Activated CD8-positive, alpha-beta T cell treated with anti-CD3 and anti-CD28 coated beads for 36 hours (primary cell): ENCODE measurements at regions of chr7 and their contacts with region 1.

Region 1: DNA sequence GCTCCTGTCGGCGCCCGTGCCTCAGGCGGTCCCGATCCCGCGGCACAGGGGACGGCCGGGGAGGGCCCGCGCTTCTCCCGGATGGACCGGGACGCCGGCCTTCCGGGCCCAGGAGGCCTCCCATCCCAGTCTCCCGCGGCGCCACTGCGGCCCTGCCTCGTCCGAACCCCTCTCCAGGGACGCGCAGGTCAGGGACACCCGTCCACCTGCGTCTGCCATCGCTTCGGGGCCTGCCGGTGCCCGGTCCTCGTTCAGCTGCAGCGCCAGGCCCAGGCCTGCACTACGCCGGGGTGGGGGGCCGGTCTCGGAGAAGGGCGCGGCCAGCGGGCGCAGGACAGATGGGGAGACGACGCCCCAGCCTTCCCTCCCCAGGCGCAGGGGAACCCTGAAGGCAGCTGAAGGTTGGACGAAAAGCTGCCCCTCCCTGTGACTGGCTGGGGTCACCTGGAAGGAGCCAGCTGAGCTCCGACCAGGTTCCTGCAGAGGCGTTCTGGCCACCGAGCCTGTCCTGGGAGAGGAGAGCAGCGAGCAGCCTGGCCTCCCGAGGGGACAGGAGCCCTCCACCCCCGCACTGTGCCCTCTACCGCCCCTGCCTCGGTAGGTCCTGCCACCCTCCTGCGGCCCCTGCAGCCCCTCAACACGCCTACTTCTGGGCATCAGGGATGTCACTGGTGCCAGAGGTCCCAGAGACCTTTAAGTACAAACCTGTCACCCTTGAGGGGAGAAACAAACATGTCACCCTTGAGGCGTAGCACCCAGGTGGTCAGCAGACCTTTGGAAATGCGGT is 84.3 kb downstream of the LANCL2 start:
- DNase-seq: no peak
- ATAC-seq: no peak
- H3K4me3 Mint-ChIP-seq: no peak overlapping the region
- H3K27ac Mint-ChIP-seq: no peak overlapping the region
- H3K4me1 Mint-ChIP-seq: peaks cover 23% of the 10 kb centered on the region
- H3K27me3 Mint-ChIP-seq: no peaks in the 10 kb centered on the region
- CTCF ChIP-seq: no peak

Region 2: GRCh38 chr7:55348499-55348898 is 100.9 kb before region 1 on chr7:
- CTCF ChIA-PET with region 1: no interaction called
- POLR2A ChIA-PET with region 1: no interaction called
- intact Hi-C with region 1: no loop called
- DNase-seq: no peak
- ATAC-seq: peak; percentile 64
- H3K4me3 Mint-ChIP-seq: no peak overlapping the region
- H3K27ac Mint-ChIP-seq: no peak overlapping the region
- H3K4me1 Mint-ChIP-seq: peaks cover 5% of the 10 kb centered on the region
- H3K27me3 Mint-ChIP-seq: peaks cover 15% of the 10 kb centered on the region
- CTCF ChIP-seq: no peak

Region 3: DNA sequence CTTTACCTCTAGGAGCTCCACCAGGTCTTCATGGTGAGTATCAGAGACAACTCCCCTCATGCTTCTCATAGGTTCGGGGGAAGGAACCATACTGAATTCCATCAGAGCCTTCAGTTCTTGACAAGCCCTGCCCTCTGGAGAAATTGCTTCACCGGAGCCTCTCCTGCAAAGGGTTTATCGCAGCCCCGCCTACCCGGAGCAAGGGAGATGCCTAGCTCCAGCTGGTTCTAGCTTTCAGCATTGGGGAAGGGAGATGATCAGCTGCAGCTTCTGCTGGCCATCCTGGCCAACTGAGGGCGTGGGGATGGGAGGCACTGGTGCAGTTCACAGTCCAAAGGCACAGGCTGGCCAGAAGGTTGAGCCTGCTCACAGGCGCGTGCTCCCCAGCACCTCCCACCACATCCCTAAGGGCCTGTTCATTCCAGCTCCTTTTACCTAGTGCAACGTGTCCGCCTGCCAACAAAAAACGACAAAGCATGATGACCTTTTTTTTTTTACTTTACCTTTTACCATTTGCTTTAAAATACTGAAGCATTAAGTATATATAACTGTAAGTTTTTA is 53.1 kb before region 1 on chr7:
- CTCF ChIA-PET with region 1: no interaction called
- POLR2A ChIA-PET with region 1: no interaction called
- intact Hi-C with region 1: loop called (anchors 5 kb)
- DNase-seq: no peak
- ATAC-seq: no peak
- H3K4me3 Mint-ChIP-seq: no peak overlapping the region
- H3K27ac Mint-ChIP-seq: no peak overlapping the region
- H3K4me1 Mint-ChIP-seq: peaks cover 4% of the 10 kb centered on the region
- H3K27me3 Mint-ChIP-seq: no peaks in the 10 kb centered on the region
- CTCF ChIP-seq: no peak

Region 4: GRCh38 chr7:55464422-55464821 is 15.0 kb after region 1 on chr7:
- CTCF ChIA-PET with region 1: no interaction called
- POLR2A ChIA-PET with region 1: no interaction called
- intact Hi-C with region 1: no loop called
- DNase-seq: no peak
- ATAC-seq: no peak
- H3K4me3 Mint-ChIP-seq: no peak overlapping the region
- H3K27ac Mint-ChIP-seq: no peak overlapping the region
- H3K4me1 Mint-ChIP-seq: peaks cover 37% of the 10 kb centered on the region
- H3K27me3 Mint-ChIP-seq: no peaks in the 10 kb centered on the region
- CTCF ChIP-seq: no peak